Dendritic cell treated with granulocyte-macrophage colony-stimulating factor and Interleukin-4, amounts not matched to agents 40 ng/mL and 50 ng/mL, for 4 days (primary cell): ENCODE measurements at regions of chr5 and their contacts with region 1.

Region 1: DNA sequence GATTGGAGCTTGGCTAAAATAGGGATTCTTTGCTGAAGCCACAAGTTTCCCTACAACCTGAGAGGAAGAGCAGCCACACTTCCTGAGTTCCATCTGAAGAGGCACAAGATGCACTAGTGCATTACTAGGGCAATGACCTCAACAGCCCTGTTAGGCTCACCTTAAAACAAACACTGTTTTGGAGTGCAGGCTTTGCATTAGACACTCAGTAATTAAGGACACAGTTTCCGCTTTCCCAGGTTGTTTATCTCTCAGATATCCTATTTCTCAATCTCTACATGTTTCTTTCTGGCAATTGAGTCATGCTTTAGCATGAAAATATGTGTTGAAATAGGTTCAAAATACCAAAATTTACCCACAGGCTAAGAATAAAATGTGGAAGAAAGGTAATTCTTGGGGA is 34.2 kb downstream of the EMB start:
- H3K4me3 Mint-ChIP-seq: no peak overlapping the region
- H3K27ac Mint-ChIP-seq: no peak overlapping the region
- H3K4me1 Mint-ChIP-seq: peaks cover 7% of the 10 kb centered on the region
- H3K27me3 Mint-ChIP-seq: no peaks in the 10 kb centered on the region

Region 2: DNA sequence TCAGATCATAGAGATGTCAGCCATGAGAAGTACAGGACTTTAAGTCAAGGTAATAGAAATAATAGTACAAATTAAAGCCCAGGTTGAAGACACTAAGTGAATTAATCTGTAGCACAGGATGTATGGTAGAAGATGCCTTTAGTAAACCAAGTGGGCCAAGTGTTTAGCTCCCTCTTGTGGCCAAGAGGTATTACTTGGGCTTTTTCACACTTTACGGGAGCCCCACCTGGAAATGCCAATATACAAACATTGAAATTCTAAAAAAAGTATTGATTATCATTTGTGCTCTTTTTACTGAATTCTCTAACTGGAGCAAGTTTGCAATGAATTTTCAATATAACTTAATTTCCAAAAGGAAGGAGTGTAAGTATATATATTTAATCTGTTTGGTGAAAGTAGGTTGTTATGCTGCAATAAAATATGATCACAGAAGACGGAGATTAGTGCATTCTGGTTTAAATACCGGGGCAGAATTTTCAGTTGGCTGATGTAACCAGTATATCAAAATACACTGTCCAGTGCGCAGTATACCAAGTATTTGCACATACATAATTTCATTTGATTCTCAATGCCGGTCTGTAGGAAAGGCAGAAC is 344.3 kb after region 1 on chr5:
- intact Hi-C with region 1: loop called (anchors 10 kb)
- H3K4me3 Mint-ChIP-seq: no peak overlapping the region
- H3K27ac Mint-ChIP-seq: no peak overlapping the region
- H3K4me1 Mint-ChIP-seq: peaks cover 23% of the 10 kb centered on the region
- H3K27me3 Mint-ChIP-seq: no peaks in the 10 kb centered on the region